ENCODE measurements at regions of chr13 and their contacts with region 1.

Region 1: DNA sequence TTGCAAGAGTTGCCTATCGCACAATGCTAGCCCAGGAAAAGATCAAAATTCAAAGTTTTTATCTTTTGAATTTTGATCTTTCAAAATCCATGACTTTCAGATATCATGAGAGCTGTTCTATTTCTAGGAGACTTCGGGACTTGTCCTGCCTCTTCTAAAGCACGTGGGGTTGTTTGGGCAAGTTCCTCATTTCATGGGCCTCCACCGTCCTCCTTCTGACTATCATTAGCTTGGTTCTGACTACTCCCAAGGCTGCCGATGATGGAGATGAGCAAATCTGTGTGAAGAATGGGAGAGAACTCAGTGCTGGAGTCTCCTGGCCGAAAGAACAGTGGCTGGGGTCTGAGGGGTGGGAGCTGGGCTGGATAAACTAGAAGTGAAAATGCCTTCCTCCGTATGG is 86.5 kb downstream of the COL4A1 start:
- DNase-seq: no peak
- ATAC-seq: no peak
- H3K4me3 ChIP-seq: no peak overlapping the region
- H3K4me3 Mint-ChIP-seq: no peak overlapping the region
- H3K27ac ChIP-seq: no peak overlapping the region
- H3K27ac Mint-ChIP-seq: no peak overlapping the region
- H3K4me1 ChIP-seq: no peaks in the 10 kb centered on the region
- H3K4me1 Mint-ChIP-seq: no peaks in the 10 kb centered on the region
- H3K27me3 ChIP-seq: peaks cover 3 to 6% of the 10 kb centered on the region in 2 experiments
- H3K27me3 Mint-ChIP-seq: peaks cover 37% of the 10 kb centered on the region
- CTCF ChIP-seq: no peak

Region 2: DNA sequence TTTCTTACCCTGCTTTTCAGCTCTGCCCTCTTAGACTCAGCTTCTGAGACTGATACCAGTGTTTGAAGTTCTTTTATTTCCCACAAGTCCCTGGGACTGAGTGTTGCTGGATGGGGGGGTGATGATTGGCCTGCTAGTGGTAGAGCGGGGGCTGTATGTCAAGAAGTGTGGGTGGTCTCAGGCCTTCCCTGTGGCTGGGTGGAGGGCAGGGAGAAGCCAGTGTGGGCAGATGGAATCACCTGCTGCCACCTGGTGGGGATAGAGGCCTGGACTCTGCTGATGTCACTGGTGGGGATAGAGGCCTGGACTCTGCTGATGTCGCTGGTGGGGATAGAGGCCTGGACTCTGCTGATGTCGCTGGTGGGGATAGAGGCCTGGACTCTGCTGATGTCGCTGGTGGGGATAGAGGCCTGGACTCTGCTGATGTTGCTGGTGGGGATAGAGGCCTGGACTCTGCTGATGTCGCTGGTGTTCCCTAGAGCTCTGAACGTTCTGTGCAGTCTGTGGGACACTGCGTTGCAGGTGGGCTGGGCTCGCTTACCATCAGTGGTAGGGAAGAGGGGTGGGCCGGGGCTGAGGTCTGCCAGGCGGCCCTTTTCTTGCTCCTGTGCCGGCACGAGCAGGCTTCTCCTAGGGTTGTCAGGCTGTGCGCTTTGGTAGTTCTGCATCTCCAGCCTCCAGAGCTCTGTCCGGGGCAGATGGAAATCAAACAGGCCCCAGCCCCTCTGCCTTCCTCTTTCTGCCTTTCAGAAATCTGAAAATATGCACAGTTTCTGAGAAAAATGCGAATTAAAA is 995.9 kb after region 1 on chr13:
- CTCF ChIA-PET with region 1: no interaction called
- POLR2A ChIA-PET with region 1: no interaction called
- intact Hi-C with region 1: loop called in 1 of 2 experiments (anchors 5 kb)
- DNase-seq: peak; percentile 19 to 68 (median 38)
- ATAC-seq: peak; percentile 69
- H3K4me3 ChIP-seq: no peak overlapping the region
- H3K4me3 Mint-ChIP-seq: no peak overlapping the region
- H3K27ac ChIP-seq: no peak overlapping the region
- H3K27ac Mint-ChIP-seq: peak overlapping the region; percentile 73
- H3K4me1 ChIP-seq: peaks cover 7% of the 10 kb centered on the region
- H3K4me1 Mint-ChIP-seq: peaks cover 64% of the 10 kb centered on the region
- H3K27me3 ChIP-seq: no peaks in the 10 kb centered on the region
- H3K27me3 Mint-ChIP-seq: no peaks in the 10 kb centered on the region
- CTCF ChIP-seq: peak; percentile 65

Measured in CD4-positive, alpha-beta T cell (primary cell).